Mammary epithelial cell (primary cell): ENCODE measurements at regions of chr15 and their contacts with region 1.

Region 1: DNA sequence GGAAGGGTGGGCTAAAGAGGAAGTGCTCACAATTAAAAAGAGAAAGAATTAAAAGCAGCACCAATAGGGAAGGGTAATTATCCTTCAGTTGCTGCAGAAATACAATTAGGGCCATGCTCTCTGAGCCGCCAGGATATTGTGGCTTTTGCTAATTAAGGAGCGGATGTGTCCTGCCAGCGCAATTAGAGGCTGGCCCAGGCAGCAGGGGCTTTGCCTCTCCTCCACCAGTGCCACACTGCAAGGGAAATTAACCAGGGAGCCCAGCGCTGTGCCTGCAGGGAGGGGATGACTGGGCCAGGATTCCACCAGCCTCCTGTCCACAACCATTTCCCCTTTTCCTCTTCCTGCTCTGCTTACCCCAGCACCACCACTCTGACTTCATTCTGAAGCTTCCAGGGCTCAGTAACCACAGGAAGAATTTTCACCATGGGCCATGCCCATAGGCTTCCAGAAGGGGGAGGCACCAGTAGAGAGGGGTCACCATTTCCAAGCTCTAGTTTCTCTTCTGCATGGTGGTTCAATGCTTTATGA is 10.4 kb upstream of the AEN start:
- DNase-seq: no peak
- H3K4me3 ChIP-seq: no peak overlapping the region
- H3K27ac ChIP-seq: no peak overlapping the region
- H3K4me1 ChIP-seq: no peaks in the 10 kb centered on the region
- H3K27me3 ChIP-seq: peaks cover 21% of the 10 kb centered on the region
- CTCF ChIP-seq: no peak

Region 2: DNA sequence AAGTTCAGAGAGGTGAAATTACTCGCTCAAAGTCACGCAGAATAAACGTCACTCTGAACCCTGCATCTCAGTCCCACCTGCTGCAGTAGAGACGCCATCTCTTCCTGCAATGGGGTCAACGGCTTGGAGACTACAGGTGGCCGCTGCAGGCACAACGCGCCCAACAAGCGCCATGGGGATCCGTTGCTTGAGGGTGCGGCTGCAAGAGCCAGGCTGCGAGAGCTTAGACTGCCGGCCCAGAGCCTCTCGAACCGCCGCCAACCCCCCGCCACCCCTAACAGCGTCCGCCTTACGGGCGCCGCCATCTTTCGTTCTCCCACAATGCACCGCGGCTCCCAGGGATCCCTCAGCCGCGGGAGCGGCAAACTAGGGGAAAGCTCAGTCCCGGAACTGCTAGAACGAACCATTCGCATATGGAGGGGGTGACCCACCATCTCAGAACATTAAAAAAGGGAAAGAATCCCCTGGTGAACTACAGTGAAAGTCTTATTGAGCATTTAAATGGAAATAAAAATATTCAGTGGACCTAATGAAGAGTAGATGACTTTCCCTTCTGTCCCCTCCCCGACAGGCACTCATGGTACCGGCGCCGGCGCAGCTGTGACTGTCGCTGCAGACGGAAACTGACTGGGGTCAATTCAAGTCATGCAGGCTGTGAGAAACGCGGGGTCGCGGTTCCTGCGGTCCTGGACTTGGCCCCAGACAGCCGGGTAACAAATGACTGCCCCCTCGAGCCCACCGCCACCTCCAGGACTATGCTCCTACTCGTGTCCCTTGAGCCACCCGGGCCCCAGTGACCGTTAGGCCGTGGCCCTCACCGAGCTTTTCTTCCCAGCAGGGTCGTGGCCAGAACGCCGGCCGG is 143.5 kb before region 1 on chr15 and contains the starts of genes MRPL46 and MRPS11:
- CTCF ChIA-PET with region 1: no interaction called
- dilution Hi-C with region 1: no loop called
- in situ Hi-C with region 1: loop called in 1 of 2 experiments (anchors 10 kb)
- intact Hi-C with region 1: no loop called
- DNase-seq: peak; percentile 80
- H3K4me3 ChIP-seq: peak within 1 kb of the TSS; percentile 78 to 90 (median 87)
- H3K27ac ChIP-seq: peak within 1 kb of the TSS; percentile 96
- H3K4me1 ChIP-seq: peaks cover 15% of the 10 kb centered on the region
- H3K27me3 ChIP-seq: no peaks in the 10 kb centered on the region
- CTCF ChIP-seq: no peak
- total RNA-seq, gene MRPL46: 10.8 to 21.6 TPM
- total RNA-seq, gene MRPS11: 21.2 to 60.2 TPM

Region 3: DNA sequence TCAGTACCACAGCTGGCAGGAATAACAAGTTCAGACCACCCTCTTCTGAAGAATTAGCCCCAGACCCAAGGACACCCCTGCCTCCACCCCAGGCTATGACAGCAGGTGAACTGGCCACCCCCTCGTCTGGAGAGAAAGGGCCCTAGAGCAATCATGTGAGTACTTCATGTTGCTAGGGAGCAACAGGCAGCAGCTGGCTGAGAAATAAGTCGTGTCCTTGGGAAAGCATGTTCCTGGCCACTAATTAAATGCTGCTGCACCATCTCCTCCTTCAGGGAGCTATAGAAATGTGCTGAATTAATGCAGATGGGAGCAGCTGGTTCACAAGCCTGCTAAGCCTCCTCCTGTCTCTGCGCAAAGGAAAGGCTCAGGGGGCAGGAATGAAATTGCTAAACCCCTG is 111.8 kb before region 1 on chr15:
- CTCF ChIA-PET with region 1: no interaction called
- dilution Hi-C with region 1: loop called (anchors 5 kb)
- in situ Hi-C with region 1: no loop called
- intact Hi-C with region 1: no loop called
- DNase-seq: no peak
- H3K4me3 ChIP-seq: no peak overlapping the region
- H3K27ac ChIP-seq: no peak overlapping the region
- H3K4me1 ChIP-seq: no peaks in the 10 kb centered on the region
- H3K27me3 ChIP-seq: no peaks in the 10 kb centered on the region
- CTCF ChIP-seq: no peak